CD4-positive, alpha-beta T cell (primary cell): ENCODE measurements at regions of chr20 and their contacts with region 1.

Region 1: DNA sequence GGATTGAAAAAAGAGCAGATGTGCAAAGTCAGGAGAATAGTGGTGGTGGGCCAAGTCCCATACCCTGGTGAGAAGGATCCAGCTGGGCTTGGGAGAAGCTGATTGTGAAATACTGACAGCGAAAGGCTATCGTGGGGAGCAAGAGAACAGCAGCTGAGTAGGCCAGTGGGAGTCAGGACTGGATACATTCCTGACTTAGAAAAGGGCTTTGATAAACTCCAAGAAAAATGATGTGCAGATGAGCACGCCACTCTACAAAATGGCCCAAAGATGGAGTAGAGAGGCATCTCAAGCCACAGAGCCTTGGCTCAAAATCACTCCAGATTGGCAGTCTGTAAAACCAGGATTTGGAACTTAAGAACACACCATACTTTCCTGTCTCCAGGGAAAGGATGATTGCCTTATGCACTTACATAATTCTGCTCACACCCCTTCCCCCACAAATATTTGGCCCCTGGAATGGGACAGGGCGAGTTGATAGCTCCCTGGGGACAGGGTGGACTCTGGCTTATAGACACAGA is 578.7 kb downstream of the MAFB start:
- DNase-seq: no peak
- ATAC-seq: no peak
- H3K4me3 ChIP-seq: no peak overlapping the region
- H3K4me3 Mint-ChIP-seq: no peak overlapping the region
- H3K27ac ChIP-seq: no peak overlapping the region
- H3K27ac Mint-ChIP-seq: no peak overlapping the region
- H3K4me1 ChIP-seq: no peaks in the 10 kb centered on the region
- H3K4me1 Mint-ChIP-seq: no peaks in the 10 kb centered on the region
- H3K27me3 ChIP-seq: no peaks in the 10 kb centered on the region
- H3K27me3 Mint-ChIP-seq: peaks cover 4% of the 10 kb centered on the region
- CTCF ChIP-seq: no peak

Region 2: GRCh38 chr20:40173872-40174271 is 63.5 kb after region 1 on chr20:
- CTCF ChIA-PET with region 1: no interaction called
- POLR2A ChIA-PET with region 1: no interaction called
- intact Hi-C with region 1: loop called in 1 of 2 experiments (anchors 10 kb)
- DNase-seq: no peak
- ATAC-seq: no peak
- H3K4me3 ChIP-seq: no peak overlapping the region
- H3K4me3 Mint-ChIP-seq: no peak overlapping the region
- H3K27ac ChIP-seq: no peak overlapping the region
- H3K27ac Mint-ChIP-seq: no peak overlapping the region
- H3K4me1 ChIP-seq: no peaks in the 10 kb centered on the region
- H3K4me1 Mint-ChIP-seq: no peaks in the 10 kb centered on the region
- H3K27me3 ChIP-seq: peaks cover 0 to 6% of the 10 kb centered on the region in 2 experiments
- H3K27me3 Mint-ChIP-seq: peaks cover 28% of the 10 kb centered on the region
- CTCF ChIP-seq: no peak